ENCODE measurements at regions of chrX and their contacts with region 1.

Region 1: GRCh38 chrX:51614353-51615012 is 4.2 kb downstream of the CENPVL3 start:
- DNase-seq: peak; percentile 2
- ATAC-seq: peak; percentile 43; the same call in 1 of the 3 replicates
- H3K4me3 ChIP-seq: no peak overlapping the region
- H3K27ac ChIP-seq: no peak overlapping the region
- H3K4me1 ChIP-seq: no peaks in the 10 kb centered on the region
- H3K27me3 ChIP-seq: no peaks in the 10 kb centered on the region
- CTCF ChIP-seq: peak; percentile 65
- EP300 ChIP-seq: no peak
- POLR2A ChIP-seq: no peak
- RAD21 ChIP-seq: peak; percentile 30; the same call in 1 of the 2 replicates

Region 2: DNA sequence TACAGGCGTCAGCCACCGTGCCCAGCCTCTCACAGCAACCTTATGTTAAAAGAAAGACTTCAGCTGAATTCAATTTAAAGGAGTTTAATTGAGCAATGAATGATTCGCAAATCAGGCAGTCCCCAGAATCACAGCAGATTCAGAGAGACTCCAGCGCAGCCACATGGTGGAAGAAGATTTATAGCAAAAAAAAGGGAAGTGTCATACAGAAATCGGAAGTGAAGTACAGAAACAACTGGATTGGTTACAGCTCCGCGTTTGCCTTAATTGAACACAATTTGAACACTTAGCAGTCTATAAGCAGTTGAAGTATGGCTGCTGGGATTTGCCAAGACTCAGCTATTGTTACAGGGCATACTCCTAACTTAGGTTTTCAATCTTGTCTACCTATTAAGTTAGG is 15.6 kb before region 1 on chrX:
- CTCF ChIA-PET with region 1: no interaction called
- POLR2A ChIA-PET with region 1: no interaction called
- in situ Hi-C with region 1: no loop called
- intact Hi-C with region 1: no loop called
- DNase-seq: no peak
- ATAC-seq: no peak
- H3K4me3 ChIP-seq: no peak overlapping the region
- H3K27ac ChIP-seq: no peak overlapping the region
- H3K4me1 ChIP-seq: no peaks in the 10 kb centered on the region
- H3K27me3 ChIP-seq: no peaks in the 10 kb centered on the region
- CTCF ChIP-seq: no peak
- EP300 ChIP-seq: no peak
- POLR2A ChIP-seq: no peak
- RAD21 ChIP-seq: no peak

Region 3: GRCh38 chrX:52220936-52221335 is 606.5 kb after region 1 on chrX:
- CTCF ChIA-PET with region 1: no interaction called
- POLR2A ChIA-PET with region 1: no interaction called
- in situ Hi-C with region 1: loop called (anchors 25 kb)
- intact Hi-C with region 1: no loop called
- DNase-seq: no peak
- ATAC-seq: no peak
- H3K4me3 ChIP-seq: no peak overlapping the region
- H3K27ac ChIP-seq: no peak overlapping the region
- H3K4me1 ChIP-seq: no peaks in the 10 kb centered on the region
- H3K27me3 ChIP-seq: no peaks in the 10 kb centered on the region
- CTCF ChIP-seq: no peak
- EP300 ChIP-seq: no peak
- POLR2A ChIP-seq: no peak
- RAD21 ChIP-seq: no peak